K562 (cell line): ENCODE measurements at regions of chr11 and their contacts with region 1.

Region 1: GRCh38 chr11:9757809-9758636 is 94.1 kb downstream of the SWAP70 start:
- DNase-seq: peak; percentile 90 to 99 (median 99)
- ATAC-seq: peak; percentile 92
- H3K4me3 ChIP-seq: peak overlapping the region; percentile 54
- H3K27ac ChIP-seq: peak overlapping the region; percentile 77
- H3K4me1 ChIP-seq: peaks cover 22 to 23% of the 10 kb centered on the region in 2 experiments
- H3K27me3 ChIP-seq: no peaks in the 10 kb centered on the region; a peak in 1 of 5 replicates
- CTCF ChIP-seq: peak; percentile 61 to 88 (median 76); a peak in 5 of 6 replicates
- EP300 ChIP-seq: no peak
- POLR2A ChIP-seq: peak; percentile 57
- RAD21 ChIP-seq: peak; percentile 92 to 95

Region 2: GRCh38 chr11:9817191-9817590 is 59.2 kb after region 1 on chr11:
- CTCF ChIA-PET with region 1: no interaction called
- POLR2A ChIA-PET with region 1: no interaction called
- in situ Hi-C with region 1: no loop called
- intact Hi-C with region 1: no loop called
- DNase-seq: no peak
- ATAC-seq: no peak
- H3K4me3 ChIP-seq: no peak overlapping the region
- H3K27ac ChIP-seq: no peak overlapping the region
- H3K4me1 ChIP-seq: no peaks in the 10 kb centered on the region
- H3K27me3 ChIP-seq: no peaks in the 10 kb centered on the region
- CTCF ChIP-seq: no peak
- EP300 ChIP-seq: no peak
- POLR2A ChIP-seq: no peak
- RAD21 ChIP-seq: no peak

Region 3: DNA sequence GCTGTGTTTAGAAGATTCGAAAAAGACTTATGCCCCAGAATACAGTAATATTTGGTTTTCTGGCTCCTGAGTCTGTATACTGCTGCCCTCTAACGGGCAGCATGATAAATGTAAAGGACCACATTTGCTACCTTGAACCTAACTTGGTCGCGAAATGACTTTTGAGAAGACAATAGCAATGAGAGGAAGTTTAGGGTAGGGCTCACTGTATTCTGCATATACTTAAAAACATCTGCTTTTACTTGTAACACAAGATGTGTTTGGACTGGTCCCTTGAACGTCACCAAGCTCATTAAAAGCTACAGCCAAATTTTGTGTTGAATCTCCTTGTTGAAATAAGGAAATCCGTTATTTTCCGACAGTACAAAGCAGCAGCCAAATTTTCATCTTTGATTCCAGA is 215.0 kb after region 1 on chr11:
- CTCF ChIA-PET with region 1: interaction called, 33 read pairs
- POLR2A ChIA-PET with region 1: no interaction called
- in situ Hi-C with region 1: loop called (anchors 5 kb)
- intact Hi-C with region 1: loop called (anchors 1 kb)
- DNase-seq: peak; percentile 39 to 61 (median 48)
- ATAC-seq: peak; percentile 82
- H3K4me3 ChIP-seq: no peak overlapping the region
- H3K27ac ChIP-seq: no peak overlapping the region
- H3K4me1 ChIP-seq: no peaks in the 10 kb centered on the region
- H3K27me3 ChIP-seq: no peaks in the 10 kb centered on the region
- CTCF ChIP-seq: peak; percentile 66 to 91 (median 71)
- EP300 ChIP-seq: no peak
- POLR2A ChIP-seq: no peak
- RAD21 ChIP-seq: peak; percentile 81 to 93

Region 4: DNA sequence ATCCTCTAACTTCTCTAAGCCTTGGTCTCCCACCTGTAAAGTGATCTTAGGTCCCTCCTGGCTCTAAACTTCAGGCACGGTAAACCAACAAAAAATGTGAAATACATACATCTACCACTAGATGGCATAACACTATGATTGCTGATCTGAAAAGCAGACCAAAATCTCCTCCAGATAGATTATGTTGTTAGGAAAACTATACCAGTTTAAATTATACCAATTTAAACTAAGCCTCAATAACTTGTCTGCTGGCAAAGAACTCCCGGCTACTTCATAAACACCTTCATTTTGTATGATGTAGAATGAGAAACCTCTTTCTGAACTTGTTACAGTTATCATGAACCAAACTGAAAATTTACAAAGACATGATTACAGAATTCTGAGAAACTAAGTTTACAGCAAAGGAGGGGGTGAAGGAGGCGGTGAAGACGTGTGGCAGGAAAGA is 450.1 kb after region 1 on chr11:
- CTCF ChIA-PET with region 1: no interaction called
- POLR2A ChIA-PET with region 1: no interaction called
- in situ Hi-C with region 1: no loop called
- intact Hi-C with region 1: loop called (anchors 10 kb)
- DNase-seq: peak; percentile 35 to 45 (median 40)
- ATAC-seq: peak; percentile 77
- H3K4me3 ChIP-seq: no peak overlapping the region
- H3K27ac ChIP-seq: no peak overlapping the region
- H3K4me1 ChIP-seq: no peaks in the 10 kb centered on the region
- H3K27me3 ChIP-seq: no peaks in the 10 kb centered on the region
- CTCF ChIP-seq: peak; percentile 47 to 73 (median 63); a peak in 5 of 6 replicates
- EP300 ChIP-seq: no peak
- POLR2A ChIP-seq: no peak
- RAD21 ChIP-seq: peak; percentile 58 to 67; a peak in 3 of 4 replicates

Region 5: DNA sequence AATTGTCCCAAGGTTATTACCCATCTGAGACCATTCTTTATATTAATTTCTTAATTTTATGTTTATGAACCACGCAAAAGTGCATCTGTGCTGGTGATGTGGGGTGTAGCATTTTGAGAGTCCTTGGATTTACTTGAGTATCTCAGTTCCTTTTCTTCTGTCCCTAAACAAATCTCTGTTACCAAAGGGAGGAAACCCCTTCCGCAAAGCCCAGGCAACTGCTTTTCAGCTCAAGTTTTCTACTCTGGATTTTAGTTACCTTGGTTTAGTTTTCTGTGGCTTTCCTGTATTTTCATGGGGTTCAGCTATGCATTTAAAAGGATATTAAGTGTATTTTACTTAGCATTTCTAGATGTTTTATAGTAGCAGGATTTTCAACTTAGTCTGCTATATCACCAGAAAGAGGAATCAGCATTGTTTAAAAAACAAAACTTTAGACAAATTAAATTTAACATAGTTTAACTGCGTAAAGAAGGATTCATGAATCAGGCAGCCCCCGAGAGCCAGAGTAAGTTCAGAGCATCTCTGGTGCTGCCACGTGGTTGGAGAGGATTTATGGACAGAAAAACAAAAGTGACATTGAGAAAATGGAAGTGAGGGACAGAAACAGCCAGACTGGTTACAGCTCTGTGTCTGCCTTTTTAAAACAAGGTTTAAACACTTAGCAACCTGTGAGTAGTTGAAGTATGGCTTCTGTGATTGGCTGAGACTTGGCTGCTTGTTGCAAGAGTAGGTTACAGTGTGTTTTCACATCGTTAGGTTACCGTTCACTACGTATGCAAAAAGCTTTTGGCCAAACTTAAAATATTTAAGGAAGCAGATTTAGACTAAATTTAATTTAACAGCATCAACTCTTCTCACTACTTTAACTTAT is 556.4 kb after region 1 on chr11:
- CTCF ChIA-PET with region 1: interaction called, 3 read pairs
- POLR2A ChIA-PET with region 1: interaction called, 3 read pairs
- in situ Hi-C with region 1: loop called (anchors 10 kb)
- intact Hi-C with region 1: loop called (anchors 5 kb)
- DNase-seq: peak in 1 of 4 experiments; percentile 10
- ATAC-seq: peak; percentile 64
- H3K4me3 ChIP-seq: no peak overlapping the region
- H3K27ac ChIP-seq: no peak overlapping the region
- H3K4me1 ChIP-seq: peaks cover 0 to 6% of the 10 kb centered on the region in 2 experiments; a peak in 2 of 5 replicates
- H3K27me3 ChIP-seq: peaks cover 0 to 4% of the 10 kb centered on the region in 2 experiments; a peak in 2 of 5 replicates
- CTCF ChIP-seq: no peak
- EP300 ChIP-seq: no peak
- POLR2A ChIP-seq: no peak
- RAD21 ChIP-seq: no peak

Region 6: DNA sequence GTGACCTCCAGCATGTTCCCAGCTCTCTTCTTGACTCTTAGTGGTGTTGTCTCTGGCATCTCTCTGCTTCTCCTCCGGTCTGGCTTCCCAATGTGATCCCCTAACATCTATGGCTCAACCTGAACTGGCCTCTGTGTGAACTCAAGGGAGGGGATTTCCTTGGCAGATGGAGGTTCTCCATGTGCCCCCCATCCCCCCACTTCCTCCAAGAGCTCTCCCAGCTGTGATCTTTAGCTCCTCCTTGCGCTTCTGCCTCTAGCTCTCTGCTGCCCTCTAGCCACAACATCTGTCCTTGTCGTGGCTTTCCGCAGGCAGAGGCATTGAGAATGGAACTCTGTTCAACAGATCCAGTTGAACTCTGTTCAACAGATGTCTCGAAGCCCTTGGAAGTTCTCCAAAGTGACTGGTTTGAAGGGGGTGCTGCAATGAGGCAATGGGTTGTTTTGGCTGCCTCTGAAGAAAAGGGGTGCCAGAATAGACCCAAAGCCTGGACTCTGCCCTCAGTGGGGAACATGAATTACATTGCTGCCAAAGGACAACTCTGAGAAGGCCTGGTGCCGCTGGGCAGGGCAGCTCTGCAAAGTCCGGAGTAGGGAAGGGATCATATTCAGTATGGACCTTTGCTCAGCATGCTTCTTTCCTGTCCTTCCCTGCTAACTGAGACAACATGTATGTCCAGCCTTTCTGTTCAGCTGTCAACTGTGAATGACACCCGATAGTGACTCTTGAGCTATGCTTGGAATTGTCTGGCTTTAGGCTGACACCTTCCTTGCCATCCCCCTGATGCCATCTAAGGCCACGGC is 608.7 kb after region 1 on chr11:
- CTCF ChIA-PET with region 1: no interaction called
- POLR2A ChIA-PET with region 1: no interaction called
- in situ Hi-C with region 1: no loop called
- intact Hi-C with region 1: loop called (anchors 5 kb)
- DNase-seq: peak; percentile 68 to 87 (median 75)
- ATAC-seq: peak; percentile 99
- H3K4me3 ChIP-seq: no peak overlapping the region
- H3K27ac ChIP-seq: no peak overlapping the region
- H3K4me1 ChIP-seq: peaks cover 3 to 4% of the 10 kb centered on the region in 2 experiments; a peak in 3 of 5 replicates
- H3K27me3 ChIP-seq: peaks cover 0 to 4% of the 10 kb centered on the region in 2 experiments; a peak in 1 of 5 replicates
- CTCF ChIP-seq: peak; percentile 91 to 93 (median 91)
- EP300 ChIP-seq: 0 out of 2 replicates have a peak, but pooled peaks have one; percentile 14
- POLR2A ChIP-seq: no peak
- RAD21 ChIP-seq: peak; percentile 68 to 85